Adrenal gland (tissue), 19 donors: ENCODE measurements at regions of chr16 and their contacts with region 1.

Region 1: DNA sequence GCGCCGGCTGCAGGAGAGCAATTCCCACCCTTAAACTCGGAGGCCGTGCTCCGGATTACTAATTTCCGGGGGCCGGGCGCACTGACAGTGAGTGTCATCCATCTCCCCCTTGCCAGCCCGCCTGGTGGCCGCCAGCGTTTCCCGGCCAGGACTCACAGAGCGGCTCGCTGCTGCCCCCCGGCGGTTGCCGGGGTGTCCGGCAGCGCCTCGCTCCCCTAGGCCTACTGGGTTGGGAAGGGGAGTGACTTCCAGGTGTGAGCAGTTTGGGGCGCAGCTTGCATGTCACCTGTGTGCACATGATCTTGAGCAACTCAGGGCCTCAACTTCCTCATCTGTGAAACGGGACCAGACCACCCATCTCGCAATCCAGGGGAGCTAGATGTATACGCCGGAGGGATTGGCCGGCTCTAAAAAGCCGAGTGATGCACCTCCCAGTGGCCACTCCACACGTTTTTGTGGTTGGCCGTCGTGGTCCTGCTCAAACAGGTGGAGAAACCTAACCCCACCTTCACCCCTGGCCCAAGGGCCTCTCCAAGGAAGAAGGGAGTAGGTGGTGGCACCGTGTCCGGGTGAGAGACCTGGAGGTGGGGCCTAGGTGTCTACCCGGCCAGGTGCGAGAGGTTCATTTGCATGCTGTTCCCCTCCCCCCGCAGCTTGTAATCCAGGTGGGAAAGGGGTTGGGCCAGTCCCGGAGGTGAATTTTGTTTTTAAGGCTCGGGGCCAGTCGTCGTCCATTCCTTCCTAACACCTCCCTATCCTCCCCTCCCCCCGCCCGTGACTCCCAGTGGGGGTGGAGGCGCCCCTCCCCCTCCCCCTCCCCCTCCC is 2.4 kb upstream of the GSE1 start:
- DNase-seq: peak; percentile 88 to 95 (median 91)
- H3K4me3 ChIP-seq: peak overlapping the region in 2 of 4 donors; percentile 50 to 57
- H3K27ac ChIP-seq: peak overlapping the region; percentile 66 to 98 (median 94)
- H3K4me1 ChIP-seq: peaks cover 49 to 59% of the 10 kb centered on the region in 2 donors
- H3K27me3 ChIP-seq: no peaks in the 10 kb centered on the region
- CTCF ChIP-seq: peak; percentile 91 to 99 (median 99)
- POLR2A ChIP-seq: peak in 1 of 2 donors; percentile 23

Region 2: DNA sequence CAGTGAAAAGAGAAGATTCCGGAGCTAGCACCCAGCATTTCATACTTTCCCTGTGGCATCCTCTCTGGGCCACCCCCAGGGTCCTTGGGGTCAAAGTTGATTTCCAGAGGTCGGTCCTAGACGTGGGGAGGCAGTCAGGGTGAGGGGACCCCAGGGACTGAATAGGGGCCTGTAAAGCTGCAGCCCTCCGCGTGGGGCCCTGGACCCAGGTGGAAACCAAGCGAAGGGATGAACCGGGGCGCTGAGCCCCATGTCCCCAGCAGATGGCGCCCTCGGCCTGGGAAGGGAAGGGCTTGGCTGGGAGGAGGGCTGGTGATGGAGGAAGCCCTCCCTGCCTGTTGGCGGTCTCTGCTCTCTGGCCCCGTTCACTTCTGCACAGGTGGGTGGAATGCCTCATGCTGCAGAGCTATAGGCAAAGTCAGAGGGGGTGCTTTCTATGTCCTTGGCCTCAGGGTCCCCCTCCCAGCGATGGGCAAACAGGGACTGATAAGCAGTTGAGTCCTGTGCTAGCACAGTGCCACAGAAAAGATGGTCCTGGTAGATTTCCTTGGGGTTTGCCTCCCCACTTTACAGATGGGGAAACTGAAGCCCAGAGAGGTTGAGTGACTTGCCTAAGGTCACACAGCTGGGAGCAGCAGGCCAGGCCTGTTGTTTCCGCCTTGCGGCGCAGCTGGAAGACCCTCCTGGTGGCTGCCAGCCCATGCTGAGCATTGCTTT is 335.0 kb before region 1 on chr16:
- intact Hi-C with region 1: loop called (anchors 10 kb)
- DNase-seq: peak; percentile 68 to 85 (median 77)
- H3K4me3 ChIP-seq: no peak overlapping the region
- H3K27ac ChIP-seq: peak overlapping the region in 3 of 5 donors; percentile 76 to 94 (median 88)
- H3K4me1 ChIP-seq: peaks cover 26 to 44% of the 10 kb centered on the region in 2 donors
- H3K27me3 ChIP-seq: no peaks in the 10 kb centered on the region
- CTCF ChIP-seq: peak; percentile 82 to 97 (median 90)
- POLR2A ChIP-seq: no peak

Region 3: DNA sequence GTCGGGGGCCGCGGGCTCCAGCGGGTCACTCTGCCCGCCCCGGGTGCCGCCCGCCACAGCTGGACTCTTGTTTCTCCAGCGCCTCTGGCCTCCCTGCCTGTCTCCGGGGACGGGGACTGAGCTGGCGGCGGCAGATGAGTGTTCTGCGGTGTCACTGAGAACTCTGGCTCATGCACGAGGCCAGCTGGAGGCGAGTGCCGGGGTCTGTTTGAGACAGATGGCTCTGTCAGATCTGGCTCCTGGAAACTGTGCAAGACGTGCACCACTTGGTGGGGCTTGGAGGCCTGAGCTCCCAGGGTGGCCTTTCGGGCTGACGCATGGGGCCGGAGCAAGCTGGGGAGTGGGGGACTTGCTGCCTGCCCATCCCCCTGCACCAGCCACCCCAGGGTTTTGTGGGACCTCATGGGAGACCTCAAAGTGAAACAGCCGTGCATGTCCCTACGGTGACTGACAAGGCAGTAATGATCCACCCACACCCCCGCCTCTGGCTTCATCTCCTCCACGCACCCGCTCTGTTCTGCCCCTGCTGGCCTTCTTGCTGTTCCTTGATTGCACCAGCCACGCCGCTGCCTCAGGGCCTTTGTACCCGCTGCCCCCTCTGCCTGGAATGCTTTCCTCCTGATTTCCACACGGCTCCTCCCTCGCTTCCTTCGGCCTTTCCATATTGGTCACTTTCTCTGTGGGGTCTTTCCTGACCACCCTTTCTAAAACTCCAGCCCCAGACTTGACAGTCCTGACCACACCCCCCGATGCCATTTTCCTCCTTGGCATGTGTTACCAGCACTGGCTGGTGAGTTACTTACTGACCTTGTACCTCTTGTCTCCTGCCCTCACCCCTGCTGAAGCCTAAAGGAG is 323.5 kb before region 1 on chr16:
- intact Hi-C with region 1: loop called in 1 of 2 experiments (anchors 10 kb)
- DNase-seq: peak in 6 of 7 donors; percentile 78 to 86 (median 80)
- H3K4me3 ChIP-seq: no peak overlapping the region
- H3K27ac ChIP-seq: peak overlapping the region; percentile 69 to 94 (median 81)
- H3K4me1 ChIP-seq: peaks cover 38 to 71% of the 10 kb centered on the region in 2 donors
- H3K27me3 ChIP-seq: no peaks in the 10 kb centered on the region
- CTCF ChIP-seq: peak in 2 of 6 experiments; percentile 19 to 23
- POLR2A ChIP-seq: no peak

Region 4: DNA sequence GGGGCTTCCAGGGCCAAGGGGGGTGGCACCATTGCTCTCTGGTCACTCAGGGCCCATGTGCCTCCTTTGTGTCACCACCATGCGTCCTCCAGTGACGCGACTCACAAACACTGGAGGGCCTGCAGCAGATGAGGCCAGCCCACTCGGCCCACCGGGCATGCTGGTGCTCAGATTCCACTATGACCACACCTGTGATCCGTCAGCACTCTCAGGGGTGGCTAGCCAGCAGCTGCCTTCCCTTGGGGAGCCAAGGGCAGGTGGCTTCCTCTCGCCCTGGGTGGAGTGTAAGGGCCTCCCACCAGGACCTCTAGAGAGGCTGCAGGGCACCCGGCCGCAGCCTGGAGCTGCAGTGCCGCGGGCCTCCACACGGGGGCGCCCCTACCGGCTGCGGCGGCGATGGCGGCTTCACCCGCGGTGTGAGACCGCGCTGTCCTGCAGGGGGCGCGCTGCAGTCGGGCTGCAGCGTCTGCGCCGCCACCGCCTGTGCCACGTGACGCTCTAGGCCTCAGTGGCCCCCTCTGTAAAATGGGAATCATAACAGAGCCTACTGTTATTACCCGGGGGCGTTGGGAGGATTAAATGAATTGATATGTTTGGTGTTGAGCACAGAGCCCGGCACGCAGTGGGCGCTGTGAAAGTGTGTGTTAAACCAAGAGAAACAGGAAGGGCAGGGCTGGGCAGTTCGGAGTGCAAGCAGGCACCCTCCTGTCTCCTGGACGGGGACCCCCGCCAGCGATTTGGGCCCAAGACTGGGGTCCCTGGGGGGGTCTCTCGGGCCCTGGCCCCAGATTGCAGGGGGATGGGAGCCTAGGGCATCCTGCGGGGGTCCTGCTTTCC is 190.0 kb before region 1 on chr16:
- intact Hi-C with region 1: loop called (anchors 5 kb)
- DNase-seq: peak in 6 of 7 donors; percentile 45 to 71 (median 60)
- H3K4me3 ChIP-seq: no peak overlapping the region
- H3K27ac ChIP-seq: no peak overlapping the region
- H3K4me1 ChIP-seq: peaks cover 0 to 8% of the 10 kb centered on the region in 2 donors
- H3K27me3 ChIP-seq: no peaks in the 10 kb centered on the region
- CTCF ChIP-seq: peak; percentile 93 to 100 (median 99)
- POLR2A ChIP-seq: no peak

Region 5: GRCh38 chr16:85541980-85542900 is 68.5 kb before region 1 on chr16:
- intact Hi-C with region 1: no loop called
- DNase-seq: no peak
- H3K4me3 ChIP-seq: no peak overlapping the region
- H3K27ac ChIP-seq: peak overlapping the region in 1 of 5 donors; percentile 13
- H3K4me1 ChIP-seq: peaks cover 0 to 5% of the 10 kb centered on the region in 2 donors
- H3K27me3 ChIP-seq: no peaks in the 10 kb centered on the region
- CTCF ChIP-seq: no peak
- POLR2A ChIP-seq: no peak

Region 6: GRCh38 chr16:85569615-85570212 is 41.0 kb before region 1 on chr16:
- intact Hi-C with region 1: loop called in 1 of 2 experiments (anchors 5 kb)
- DNase-seq: peak in 5 of 7 donors; percentile 51 to 75 (median 69)
- H3K4me3 ChIP-seq: no peak overlapping the region
- H3K27ac ChIP-seq: peak overlapping the region in 2 of 5 donors; percentile 49 to 56
- H3K4me1 ChIP-seq: peaks cover 14 to 47% of the 10 kb centered on the region in 2 donors
- H3K27me3 ChIP-seq: no peaks in the 10 kb centered on the region
- CTCF ChIP-seq: no peak
- POLR2A ChIP-seq: no peak

Region 7: DNA sequence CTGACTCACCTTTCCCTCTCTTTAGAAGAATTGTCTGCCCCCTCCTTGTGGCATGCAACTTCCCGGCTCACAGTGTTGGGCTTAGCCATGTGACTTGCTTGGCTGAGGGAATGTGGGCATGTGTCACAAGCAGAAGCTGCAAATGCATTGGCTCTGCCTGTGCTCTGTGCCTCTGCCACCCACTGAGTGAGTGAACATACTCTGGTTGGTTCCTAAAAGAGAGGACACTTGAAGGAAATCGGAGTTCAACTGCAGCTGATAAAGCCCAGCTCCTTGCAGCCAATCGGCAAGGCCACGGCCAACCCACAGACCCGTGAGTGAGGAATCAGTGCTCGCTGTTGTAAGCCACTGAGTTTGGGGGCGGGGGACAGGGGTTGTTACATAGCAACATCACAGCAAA is 88.9 kb after region 1 on chr16:
- intact Hi-C with region 1: no loop called
- DNase-seq: peak in 6 of 7 donors; percentile 76 to 86 (median 79)
- H3K4me3 ChIP-seq: no peak overlapping the region
- H3K27ac ChIP-seq: peak overlapping the region in 1 of 5 donors; percentile 29
- H3K4me1 ChIP-seq: no peaks in the 10 kb centered on the region
- H3K27me3 ChIP-seq: no peaks in the 10 kb centered on the region
- CTCF ChIP-seq: no peak
- POLR2A ChIP-seq: no peak